Sigmoid colon (tissue), 7 donors: ENCODE measurements at regions of chr16 and their contacts with region 1.

Region 1: DNA sequence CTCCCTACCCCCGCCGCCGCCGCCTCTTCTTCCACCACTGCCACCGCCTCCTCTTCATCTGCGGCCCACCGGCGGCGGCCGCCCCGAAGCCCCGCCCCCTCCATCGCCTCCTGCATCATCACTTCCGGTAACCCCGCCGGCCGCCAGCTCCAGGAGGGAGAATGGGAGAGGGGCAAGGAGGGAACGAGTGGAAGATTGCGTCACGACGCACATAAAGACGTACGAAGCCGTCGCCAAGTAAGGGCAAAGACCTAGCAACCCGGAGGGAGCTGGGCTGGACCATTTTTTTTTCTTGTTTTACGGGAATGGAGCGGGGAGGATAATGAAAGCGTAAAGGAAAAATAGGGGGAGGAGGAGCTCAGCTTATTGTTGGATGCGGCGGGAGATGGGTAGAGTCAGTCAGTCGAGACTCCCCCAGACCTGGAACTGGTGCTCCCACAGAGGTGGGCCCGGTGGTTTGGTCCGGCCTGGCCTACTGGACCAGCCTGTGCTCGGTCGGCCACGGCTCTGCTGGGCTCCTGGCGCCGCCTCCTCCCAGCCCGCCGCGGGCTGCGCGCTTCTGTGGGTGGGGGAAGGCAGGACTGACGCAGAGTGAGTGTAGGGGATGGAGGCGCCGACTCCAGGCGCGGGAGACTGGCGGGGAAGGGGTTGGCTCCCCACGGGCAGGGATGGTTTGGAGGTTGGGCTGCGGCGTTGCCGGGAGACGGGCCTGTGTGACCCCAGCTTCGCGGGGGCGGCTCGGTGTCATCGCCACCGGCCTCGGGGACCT is at the starts of genes DCUN1D3 and LYRM1:
- DNase-seq: peak; percentile 99
- H3K4me3 ChIP-seq: peak within 1 kb of the TSS; percentile 75 to 91 (median 80)
- H3K27ac ChIP-seq: peak within 1 kb of the TSS; percentile 96 to 99 (median 98)
- H3K4me1 ChIP-seq: peaks cover 0 to 78% (median 71%) of the 10 kb centered on the region in 4 donors
- H3K27me3 ChIP-seq: no peaks in the 10 kb centered on the region
- CTCF ChIP-seq: no peak
- EP300 ChIP-seq: peak in 3 of 4 donors; percentile 25 to 79 (median 62)
- POLR2A ChIP-seq: peak; percentile 96
- total RNA-seq, gene DCUN1D3: 10.8 to 21.6 (median 16.2) TPM
- total RNA-seq, gene LYRM1: 38.5 to 85.6 (median 53.4) TPM

Region 2: GRCh38 chr16:20611975-20612481 is 288.5 kb before region 1 on chr16:
- intact Hi-C with region 1: no loop called
- DNase-seq: peak; percentile 84
- H3K4me3 ChIP-seq: peak overlapping the region in 1 of 4 donors; percentile 8
- H3K27ac ChIP-seq: peak overlapping the region; percentile 42 to 60 (median 54)
- H3K4me1 ChIP-seq: peaks cover 0 to 34% (median 17%) of the 10 kb centered on the region in 4 donors
- H3K27me3 ChIP-seq: no peaks in the 10 kb centered on the region
- CTCF ChIP-seq: no peak
- EP300 ChIP-seq: no peak
- POLR2A ChIP-seq: no peak

Region 3: GRCh38 chr16:20741554-20742285 is 158.8 kb before region 1 on chr16 and contains the start of gene THUMPD1:
- intact Hi-C with region 1: loop called (anchors 2 kb)
- DNase-seq: peak; percentile 98
- H3K4me3 ChIP-seq: peak within 1 kb of the TSS; percentile 66 to 99 (median 90)
- H3K27ac ChIP-seq: peak within 1 kb of the TSS; percentile 92 to 100 (median 98)
- H3K4me1 ChIP-seq: peaks cover 0 to 34% (median 25%) of the 10 kb centered on the region in 4 donors
- H3K27me3 ChIP-seq: no peaks in the 10 kb centered on the region
- CTCF ChIP-seq: no peak
- EP300 ChIP-seq: no peak
- POLR2A ChIP-seq: peak; percentile 93 to 94
- total RNA-seq, gene THUMPD1: 59.3 to 115 (median 112) TPM

Region 4: DNA sequence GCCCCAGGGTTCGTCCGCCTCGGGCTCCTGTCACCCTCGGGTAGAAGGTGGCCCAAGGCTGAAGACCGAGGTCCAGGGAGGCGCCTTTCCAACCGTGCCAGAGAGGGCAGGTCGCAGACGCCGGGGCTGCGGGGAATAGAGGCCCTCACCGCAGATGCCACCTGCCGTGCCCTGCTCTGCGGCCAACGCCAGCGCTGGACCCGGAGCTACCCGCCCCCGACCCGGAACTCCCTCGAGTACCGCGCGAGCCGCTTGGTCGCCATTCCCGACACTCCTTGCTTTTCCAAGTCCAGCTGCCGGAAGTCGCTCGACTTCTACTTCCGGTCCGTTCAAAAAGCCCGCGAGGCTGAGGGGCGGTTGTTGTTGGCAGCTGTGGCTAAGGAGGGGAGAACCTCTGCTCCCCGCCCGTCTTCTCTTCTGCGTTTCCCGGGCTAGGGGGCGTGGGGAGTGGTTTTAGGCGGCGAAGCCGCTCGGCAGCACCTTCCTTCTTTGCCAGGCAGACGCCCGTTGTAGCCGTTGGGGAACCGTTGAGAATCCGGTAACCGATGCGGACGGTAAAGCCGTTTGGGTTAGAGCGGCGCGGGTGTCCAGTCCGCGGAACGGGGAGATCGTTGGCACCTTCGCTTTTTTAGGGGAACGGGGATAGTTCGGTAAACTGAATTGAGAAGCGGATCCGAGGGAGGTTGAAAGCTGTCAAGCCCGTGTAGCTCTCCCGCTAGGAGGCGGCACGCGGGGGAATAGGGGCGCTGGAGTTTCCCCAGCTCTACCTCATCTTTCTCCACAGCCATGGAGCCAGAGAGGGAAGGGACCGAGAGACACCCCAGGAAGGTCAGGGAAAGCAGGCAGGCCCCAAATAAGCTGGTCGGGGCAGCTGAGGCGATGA is 94.1 kb before region 1 on chr16 and contains the starts of genes ERI2 and REXO5:
- intact Hi-C with region 1: loop called (anchors 10 kb)
- DNase-seq: peak; percentile 95
- H3K4me3 ChIP-seq: peak within 1 kb of the TSS; percentile 73 to 87 (median 80)
- H3K27ac ChIP-seq: peak within 1 kb of the TSS; percentile 81 to 95 (median 92)
- H3K4me1 ChIP-seq: peaks cover 0 to 16% (median 13%) of the 10 kb centered on the region in 4 donors
- H3K27me3 ChIP-seq: no peaks in the 10 kb centered on the region
- CTCF ChIP-seq: peak in 2 of 4 experiments; percentile 5 to 34
- EP300 ChIP-seq: no peak
- POLR2A ChIP-seq: peak in 1 of 2 donors; percentile 36
- total RNA-seq, gene ERI2: 7.2 to 19.3 (median 16.6) TPM
- total RNA-seq, gene REXO5: 1.8 to 7.5 (median 3.0) TPM

Region 5: DNA sequence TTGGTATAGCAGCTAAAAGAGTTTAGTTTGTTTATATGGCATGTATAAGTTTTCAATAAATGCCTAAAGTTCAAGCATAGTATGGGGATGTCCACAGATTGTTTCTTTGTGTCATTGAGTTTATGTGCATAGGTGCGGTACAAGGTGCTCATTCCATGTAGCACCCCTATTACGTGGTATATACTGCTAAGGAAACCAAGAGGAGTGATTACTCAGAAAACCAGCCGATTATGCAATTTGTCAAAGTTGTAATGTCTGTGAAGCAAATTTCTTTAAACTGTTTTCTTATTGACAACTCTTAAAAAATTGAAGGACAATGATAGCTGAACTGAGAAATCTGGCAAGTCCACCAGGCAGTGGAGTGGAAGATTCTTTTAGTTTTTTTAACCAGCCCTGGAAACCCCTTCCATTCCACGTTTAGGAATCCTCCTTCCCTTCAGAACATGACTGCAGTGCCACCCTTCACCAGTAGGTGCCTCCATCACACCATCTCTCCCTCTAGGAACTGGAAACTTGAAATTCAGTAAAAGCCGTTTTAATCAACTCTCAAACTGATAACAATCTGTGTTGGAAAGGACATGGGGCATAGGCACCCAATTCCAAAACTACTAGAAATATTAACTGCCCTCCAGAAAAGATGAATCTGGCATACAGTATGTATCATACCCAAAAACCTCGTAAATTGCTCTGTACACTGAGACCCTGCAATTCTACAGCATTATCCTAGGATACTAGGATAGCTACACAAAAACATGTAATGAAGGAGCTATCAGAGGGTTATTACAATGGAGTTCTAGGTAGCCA is 50.7 kb before region 1 on chr16:
- intact Hi-C with region 1: loop called (anchors 2 kb)
- DNase-seq: peak; percentile 84
- H3K4me3 ChIP-seq: no peak overlapping the region
- H3K27ac ChIP-seq: peak overlapping the region; percentile 79 to 90 (median 82)
- H3K4me1 ChIP-seq: peaks cover 0 to 49% (median 43%) of the 10 kb centered on the region in 4 donors
- H3K27me3 ChIP-seq: no peaks in the 10 kb centered on the region
- CTCF ChIP-seq: peak; percentile 88 to 99 (median 98)
- EP300 ChIP-seq: no peak
- POLR2A ChIP-seq: no peak

Region 6: DNA sequence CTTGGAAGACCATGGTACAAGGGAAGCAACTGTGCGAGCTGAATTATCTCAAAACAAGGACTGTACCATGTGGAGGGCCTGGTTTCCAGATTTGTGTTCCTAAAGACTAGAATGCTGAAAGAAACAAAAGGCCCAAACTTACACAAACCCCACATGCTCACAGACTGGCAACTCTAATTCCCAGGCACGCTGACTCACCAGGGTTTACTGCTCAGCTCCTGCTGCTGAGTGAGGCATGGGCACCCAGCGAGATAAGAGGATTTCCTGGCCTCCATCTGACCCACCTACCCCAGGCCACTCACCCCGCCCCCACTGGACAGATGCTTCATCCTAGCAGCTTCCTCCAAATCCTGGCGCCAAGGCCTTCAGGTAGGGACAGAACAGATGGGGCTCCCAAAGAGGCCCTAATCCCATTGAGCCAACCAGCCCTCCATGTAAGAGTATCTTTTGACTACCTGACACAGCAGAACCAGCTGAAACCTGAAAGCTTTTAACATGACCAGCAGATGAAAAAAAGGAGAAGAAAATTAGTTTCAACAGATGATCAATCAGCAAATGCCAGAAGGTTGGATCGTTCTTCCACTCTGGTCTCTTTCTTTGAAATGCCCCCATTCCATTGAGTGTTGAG is 34.2 kb before region 1 on chr16:
- intact Hi-C with region 1: loop called (anchors 2 kb)
- DNase-seq: peak; percentile 73
- H3K4me3 ChIP-seq: no peak overlapping the region
- H3K27ac ChIP-seq: peak overlapping the region; percentile 74 to 82 (median 75)
- H3K4me1 ChIP-seq: peaks cover 0 to 83% (median 75%) of the 10 kb centered on the region in 4 donors
- H3K27me3 ChIP-seq: no peaks in the 10 kb centered on the region
- CTCF ChIP-seq: no peak
- EP300 ChIP-seq: no peak
- POLR2A ChIP-seq: no peak

Region 7: GRCh38 chr16:21158208-21159110 is 258.0 kb after region 1 on chr16 and contains the start of gene LDAF1:
- intact Hi-C with region 1: loop called (anchors 5 kb)
- DNase-seq: peak; percentile 93
- H3K4me3 ChIP-seq: peak within 1 kb of the TSS; percentile 56 to 79 (median 59)
- H3K27ac ChIP-seq: peak within 1 kb of the TSS; percentile 85 to 93 (median 89)
- H3K4me1 ChIP-seq: peaks cover 0 to 54% (median 52%) of the 10 kb centered on the region in 4 donors
- H3K27me3 ChIP-seq: no peaks in the 10 kb centered on the region
- CTCF ChIP-seq: no peak
- EP300 ChIP-seq: no peak
- POLR2A ChIP-seq: peak; percentile 61
- total RNA-seq, gene LDAF1: 111 to 158 (median 123) TPM